ENCODE measurements at regions of chr16 and their contacts with region 1.

Region 1: GRCh38 chr16:67672739-67673662 is 6.4 kb downstream of the C16orf86 start:
- DNase-seq: peak; percentile 40 to 60 (median 53)
- H3K4me3 ChIP-seq: no peak overlapping the region
- H3K4me3 Mint-ChIP-seq: no peak overlapping the region
- H3K27ac ChIP-seq: no peak overlapping the region
- H3K27ac Mint-ChIP-seq: peak overlapping the region in 6 of 7 donors; percentile 30 to 77 (median 36)
- H3K4me1 ChIP-seq: peaks cover 5% of the 10 kb centered on the region
- H3K4me1 Mint-ChIP-seq: peaks cover 4 to 21% (median 9%) of the 10 kb centered on the region in 4 donors
- H3K27me3 ChIP-seq: no peaks in the 10 kb centered on the region
- H3K27me3 Mint-ChIP-seq: no peaks in the 10 kb centered on the region

Region 2: DNA sequence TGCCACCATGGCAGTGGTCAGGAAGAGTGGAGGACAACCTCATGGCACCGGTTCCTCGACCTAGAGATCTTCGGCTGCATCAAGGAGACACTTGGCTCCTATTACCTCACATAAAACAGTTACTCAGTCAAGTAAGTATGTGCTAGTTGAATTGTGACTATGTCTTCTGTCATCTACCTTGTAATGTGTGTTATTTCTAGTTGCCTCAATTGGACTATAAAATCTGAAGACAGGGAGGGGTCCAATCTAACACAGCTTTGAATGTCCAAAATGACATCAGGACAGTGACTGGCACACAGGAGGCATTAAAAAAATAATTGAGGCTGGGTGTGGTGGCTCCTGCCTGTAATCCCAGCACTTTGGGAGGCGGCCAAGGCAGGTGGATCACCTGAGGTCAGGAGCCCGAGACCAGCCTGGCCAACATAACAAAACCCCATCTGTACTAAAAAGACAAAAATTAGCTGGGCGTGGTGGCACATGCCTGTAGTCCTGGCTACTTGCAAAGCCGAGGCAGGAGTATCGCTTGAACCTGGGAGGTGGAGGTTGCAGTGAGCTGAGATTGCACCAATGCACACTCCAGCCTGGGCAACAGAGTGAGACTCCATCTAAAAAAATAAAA is 10.9 kb after region 1 on chr16:
- CTCF ChIA-PET with region 1: interaction called, 20 read pairs
- POLR2A ChIA-PET with region 1: interaction called, 4 read pairs
- intact Hi-C with region 1: no loop called
- DNase-seq: no peak
- H3K4me3 ChIP-seq: no peak overlapping the region
- H3K4me3 Mint-ChIP-seq: peak overlapping the region in 2 of 8 donors; percentile 1 to 26
- H3K27ac ChIP-seq: no peak overlapping the region
- H3K27ac Mint-ChIP-seq: peak overlapping the region in 6 of 7 donors; percentile 35 to 84 (median 75)
- H3K4me1 ChIP-seq: peaks cover 19% of the 10 kb centered on the region
- H3K4me1 Mint-ChIP-seq: peaks cover 20 to 40% (median 28%) of the 10 kb centered on the region in 4 donors
- H3K27me3 ChIP-seq: no peaks in the 10 kb centered on the region
- H3K27me3 Mint-ChIP-seq: no peaks in the 10 kb centered on the region

Region 3: GRCh38 chr16:67719048-67719777 is 46.2 kb after region 1 on chr16 and contains the start of gene GFOD2:
- CTCF ChIA-PET with region 1: interaction called, 25 read pairs
- POLR2A ChIA-PET with region 1: no interaction called
- intact Hi-C with region 1: no loop called
- DNase-seq: peak; percentile 95 to 99 (median 96)
- H3K4me3 ChIP-seq: peak within 1 kb of the TSS; percentile 69 to 81
- H3K4me3 Mint-ChIP-seq: peak within 1 kb of the TSS; percentile 94 to 99 (median 97)
- H3K27ac ChIP-seq: peak within 1 kb of the TSS; percentile 83
- H3K27ac Mint-ChIP-seq: peak within 1 kb of the TSS; percentile 89 to 100 (median 98)
- H3K4me1 ChIP-seq: peaks cover 27% of the 10 kb centered on the region
- H3K4me1 Mint-ChIP-seq: peaks cover 29 to 50% (median 40%) of the 10 kb centered on the region in 4 donors
- H3K27me3 ChIP-seq: no peaks in the 10 kb centered on the region
- H3K27me3 Mint-ChIP-seq: no peaks in the 10 kb centered on the region
- total RNA-seq, gene GFOD2: 18.0 to 19.8 TPM

Region 4: GRCh38 chr16:67736858-67737257 is 63.9 kb after region 1 on chr16:
- CTCF ChIA-PET with region 1: no interaction called
- POLR2A ChIA-PET with region 1: no interaction called
- intact Hi-C with region 1: loop called (anchors 2 kb)
- DNase-seq: no peak
- H3K4me3 ChIP-seq: no peak overlapping the region
- H3K4me3 Mint-ChIP-seq: no peak overlapping the region
- H3K27ac ChIP-seq: no peak overlapping the region
- H3K27ac Mint-ChIP-seq: peak overlapping the region in 2 of 7 donors; percentile 22 to 32
- H3K4me1 ChIP-seq: no peaks in the 10 kb centered on the region
- H3K4me1 Mint-ChIP-seq: peaks cover 0 to 4% (median 0%) of the 10 kb centered on the region in 4 donors
- H3K27me3 ChIP-seq: no peaks in the 10 kb centered on the region
- H3K27me3 Mint-ChIP-seq: no peaks in the 10 kb centered on the region

Region 5: DNA sequence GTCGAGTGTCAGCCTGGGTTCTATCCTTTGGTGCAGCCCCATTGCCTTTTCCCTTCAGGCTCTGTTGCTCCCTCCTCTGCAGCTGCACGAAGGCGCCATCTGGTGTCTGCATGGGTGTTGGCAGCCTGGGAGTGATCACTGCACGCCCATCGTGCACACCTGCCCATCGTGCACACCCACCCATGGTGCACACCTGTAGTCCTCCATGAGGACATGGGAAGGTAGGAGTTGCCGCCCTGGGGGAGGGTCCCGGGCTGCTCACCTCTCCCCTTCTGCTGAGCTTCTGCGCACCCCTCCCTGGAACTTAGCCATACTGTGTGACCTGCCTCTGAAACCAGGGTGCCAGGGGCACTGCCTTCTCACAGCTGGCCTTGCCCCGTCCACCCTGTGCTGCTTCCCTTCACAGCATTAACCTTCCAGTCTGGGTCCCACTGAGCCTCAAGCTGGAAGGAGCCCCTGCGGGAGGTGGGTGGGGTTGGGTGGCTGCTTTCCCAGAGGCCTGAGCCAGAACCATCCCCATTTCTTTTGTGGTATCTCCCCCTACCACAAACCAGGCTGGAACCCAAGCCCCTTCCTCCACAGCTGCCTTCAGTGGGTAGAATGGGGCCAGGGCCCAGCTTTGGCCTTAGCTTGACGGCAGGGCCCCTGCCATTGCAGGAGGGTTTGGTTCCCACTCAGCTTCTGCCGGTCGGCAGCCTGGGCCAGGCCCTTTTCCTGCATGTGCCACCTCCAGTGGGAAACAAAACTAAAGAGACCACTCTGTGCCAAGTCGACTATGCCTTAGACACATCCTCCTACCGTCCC is 255.8 kb after region 1 on chr16:
- CTCF ChIA-PET with region 1: interaction called, 21 read pairs
- POLR2A ChIA-PET with region 1: interaction called, 3 read pairs
- intact Hi-C with region 1: no loop called
- DNase-seq: peak; percentile 70 to 75 (median 72)
- H3K4me3 ChIP-seq: no peak overlapping the region
- H3K4me3 Mint-ChIP-seq: no peak overlapping the region
- H3K27ac ChIP-seq: no peak overlapping the region
- H3K27ac Mint-ChIP-seq: peak overlapping the region; percentile 22 to 74 (median 69)
- H3K4me1 ChIP-seq: peaks cover 7% of the 10 kb centered on the region
- H3K4me1 Mint-ChIP-seq: peaks cover 3 to 16% (median 8%) of the 10 kb centered on the region in 4 donors
- H3K27me3 ChIP-seq: no peaks in the 10 kb centered on the region
- H3K27me3 Mint-ChIP-seq: no peaks in the 10 kb centered on the region